ENCODE measurements at regions of chr11 and their contacts with region 1.

Region 1: GRCh38 chr11:13462901-13463778 is at the start of gene BTBD10:
- DNase-seq: peak; percentile 87 to 94 (median 91)
- ATAC-seq: peak; percentile 100
- H3K4me3 ChIP-seq: peak within 1 kb of the TSS; percentile 98
- H3K4me3 Mint-ChIP-seq: peak within 1 kb of the TSS; percentile 97 to 100 (median 99)
- H3K27ac ChIP-seq: peak within 1 kb of the TSS; percentile 96
- H3K27ac Mint-ChIP-seq: peak within 1 kb of the TSS; percentile 93 to 100 (median 97)
- H3K4me1 ChIP-seq: peaks cover 18 to 20% of the 10 kb centered on the region in 2 donors
- H3K4me1 Mint-ChIP-seq: peaks cover 22 to 54% (median 46%) of the 10 kb centered on the region in 7 donors
- H3K27me3 ChIP-seq: no peaks in the 10 kb centered on the region
- H3K27me3 Mint-ChIP-seq: peaks cover 0 to 5% (median 0%) of the 10 kb centered on the region in 5 donors
- total RNA-seq, gene BTBD10: 16.3 to 25.2 (median 19.4) TPM

Region 2: DNA sequence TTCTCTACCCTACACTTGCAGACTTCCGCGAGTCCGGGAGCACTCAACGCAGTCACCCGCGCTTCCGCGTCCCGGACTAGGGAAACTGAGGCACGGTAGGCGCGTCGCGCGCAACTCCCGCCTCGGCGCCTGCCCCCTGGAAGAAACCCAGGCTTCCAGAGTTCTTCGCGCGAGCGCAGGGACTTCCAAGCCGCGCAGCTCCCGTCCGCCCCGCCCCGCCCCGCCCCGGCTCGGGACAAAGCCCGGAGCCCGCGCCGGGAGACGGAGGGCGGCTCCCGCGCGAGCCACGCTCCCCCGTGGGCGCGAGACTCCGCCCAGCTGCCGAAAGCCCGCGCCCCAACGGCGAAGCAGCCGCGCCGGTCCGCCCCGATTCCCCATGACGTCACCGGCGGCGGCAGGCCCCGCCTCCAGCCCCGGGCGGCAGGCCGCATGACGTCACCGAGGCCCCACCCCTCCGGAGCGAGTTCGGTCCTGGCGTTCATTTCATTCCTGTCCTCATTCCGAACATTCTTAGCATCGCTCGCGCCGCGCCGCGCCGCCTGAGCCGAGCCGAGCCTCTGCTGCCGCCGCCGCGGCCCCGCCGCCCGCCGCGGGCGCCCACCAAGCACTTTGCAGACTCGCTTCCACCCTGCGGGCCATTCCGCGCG is 789.1 kb before region 1 on chr11 and contains the start of gene TEAD1:
- CTCF ChIA-PET with region 1: no interaction called
- POLR2A ChIA-PET with region 1: no interaction called
- intact Hi-C with region 1: loop called in 1 of 2 experiments (anchors 10 kb)
- DNase-seq: peak; percentile 74 to 97 (median 81)
- ATAC-seq: peak; percentile 89
- H3K4me3 ChIP-seq: peak within 1 kb of the TSS; percentile 70
- H3K4me3 Mint-ChIP-seq: peak within 1 kb of the TSS; percentile 80 to 91 (median 85)
- H3K27ac ChIP-seq: no peak within 1 kb of the TSS
- H3K27ac Mint-ChIP-seq: peak within 1 kb of the TSS in 4 of 9 donors; percentile 29 to 77 (median 55)
- H3K4me1 ChIP-seq: peaks cover 5 to 6% of the 10 kb centered on the region in 2 donors
- H3K4me1 Mint-ChIP-seq: peaks cover 6 to 24% (median 9%) of the 10 kb centered on the region in 7 donors
- H3K27me3 ChIP-seq: peaks cover 5 to 50% of the 10 kb centered on the region in 2 donors
- H3K27me3 Mint-ChIP-seq: peaks cover 70 to 80% (median 75%) of the 10 kb centered on the region in 5 donors
- total RNA-seq, gene TEAD1: 0.07 to 0.22 TPM in 2 of 5 experiments, not detected in the others

Region 3: DNA sequence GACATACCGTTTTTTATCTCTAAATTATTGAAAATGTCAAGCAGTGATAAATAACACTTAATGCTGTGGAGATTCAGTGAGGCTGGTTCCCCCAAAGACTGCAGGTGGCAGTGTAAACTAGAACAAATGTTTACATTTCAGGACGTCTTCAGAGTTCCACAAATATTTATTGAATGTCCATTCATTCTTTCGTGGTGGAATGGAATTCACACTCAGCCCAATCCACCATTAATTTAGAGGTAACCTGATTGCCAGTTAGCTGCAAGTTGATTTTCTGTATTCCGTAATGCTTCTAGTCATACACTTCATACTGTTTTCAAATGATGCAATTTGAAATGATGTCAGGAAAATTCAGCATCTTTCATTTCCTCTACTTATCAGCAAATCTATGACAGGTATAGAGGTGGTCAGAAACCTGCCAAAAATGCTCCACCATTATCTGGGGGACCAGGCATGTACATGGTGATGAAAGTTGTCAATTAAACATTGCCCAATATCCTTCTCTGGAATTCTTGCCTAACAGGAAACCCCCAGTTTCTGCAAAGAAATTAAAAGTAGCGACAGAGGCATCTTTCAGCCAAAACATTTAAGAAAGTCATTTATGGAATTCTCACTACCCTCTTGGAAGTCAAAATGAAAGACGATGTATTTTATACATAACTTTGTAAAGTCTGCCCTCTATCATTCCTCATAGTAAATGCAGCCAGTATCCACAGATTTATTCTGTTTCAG is 279.9 kb before region 1 on chr11:
- CTCF ChIA-PET with region 1: no interaction called
- POLR2A ChIA-PET with region 1: no interaction called
- intact Hi-C with region 1: loop called (anchors 1 kb)
- DNase-seq: peak in 4 of 9 donors; percentile 3 to 15 (median 12)
- ATAC-seq: peak; percentile 62
- H3K4me3 ChIP-seq: no peak overlapping the region
- H3K4me3 Mint-ChIP-seq: peak overlapping the region in 8 of 10 donors; percentile 10 to 58 (median 36)
- H3K27ac ChIP-seq: no peak overlapping the region
- H3K27ac Mint-ChIP-seq: no peak overlapping the region
- H3K4me1 ChIP-seq: no peaks in the 10 kb centered on the region
- H3K4me1 Mint-ChIP-seq: peaks cover 0 to 9% (median 6%) of the 10 kb centered on the region in 7 donors
- H3K27me3 ChIP-seq: no peaks in the 10 kb centered on the region
- H3K27me3 Mint-ChIP-seq: peaks cover 5 to 16% (median 9%) of the 10 kb centered on the region in 5 donors

Region 4: GRCh38 chr11:13276832-13277767 is 186.0 kb before region 1 on chr11:
- CTCF ChIA-PET with region 1: interaction called, 9 read pairs
- POLR2A ChIA-PET with region 1: interaction called, 4 read pairs
- intact Hi-C with region 1: loop called (anchors 1 kb)
- DNase-seq: peak; percentile 93 to 97 (median 96)
- ATAC-seq: peak; percentile 91
- H3K4me3 ChIP-seq: peak overlapping the region; percentile 80
- H3K4me3 Mint-ChIP-seq: peak overlapping the region; percentile 95 to 99 (median 97)
- H3K27ac ChIP-seq: peak overlapping the region; percentile 81
- H3K27ac Mint-ChIP-seq: peak overlapping the region; percentile 72 to 97 (median 91)
- H3K4me1 ChIP-seq: peaks cover 19 to 29% of the 10 kb centered on the region in 2 donors
- H3K4me1 Mint-ChIP-seq: peaks cover 32 to 47% (median 40%) of the 10 kb centered on the region in 7 donors
- H3K27me3 ChIP-seq: no peaks in the 10 kb centered on the region
- H3K27me3 Mint-ChIP-seq: peaks cover 0 to 51% (median 0%) of the 10 kb centered on the region in 5 donors

Region 5: GRCh38 chr11:13384908-13385640 is 78.1 kb before region 1 on chr11:
- CTCF ChIA-PET with region 1: no interaction called
- POLR2A ChIA-PET with region 1: no interaction called
- intact Hi-C with region 1: loop called in 1 of 2 experiments (anchors 2 kb)
- DNase-seq: peak in 5 of 9 donors; percentile 5 to 22 (median 10)
- ATAC-seq: peak; percentile 46
- H3K4me3 ChIP-seq: no peak overlapping the region
- H3K4me3 Mint-ChIP-seq: no peak overlapping the region
- H3K27ac ChIP-seq: no peak overlapping the region
- H3K27ac Mint-ChIP-seq: peak overlapping the region in 8 of 9 donors; percentile 3 to 80 (median 46)
- H3K4me1 ChIP-seq: no peaks in the 10 kb centered on the region
- H3K4me1 Mint-ChIP-seq: peaks cover 0 to 8% (median 0%) of the 10 kb centered on the region in 7 donors
- H3K27me3 ChIP-seq: no peaks in the 10 kb centered on the region
- H3K27me3 Mint-ChIP-seq: no peaks in the 10 kb centered on the region

Region 6: DNA sequence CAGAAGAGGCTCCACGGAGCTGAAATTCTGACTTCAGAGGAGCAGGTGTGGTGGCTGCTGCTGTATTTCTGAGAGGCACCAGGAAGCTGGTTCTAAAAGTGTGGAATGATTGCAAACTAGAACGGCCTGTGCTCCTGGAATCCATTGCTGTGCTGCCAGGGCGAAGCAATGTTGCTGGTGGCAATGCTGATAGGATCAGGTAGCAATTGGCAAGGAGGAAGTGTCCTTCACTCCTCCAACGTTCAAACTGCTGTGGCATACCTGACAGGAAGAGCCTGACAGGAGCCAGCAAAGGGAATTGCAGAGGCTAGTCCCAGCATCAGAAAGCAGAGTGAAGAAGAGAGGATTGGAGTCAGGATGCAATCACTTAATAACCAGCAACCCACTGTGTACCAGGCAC is 323.5 kb after region 1 on chr11:
- CTCF ChIA-PET with region 1: no interaction called
- POLR2A ChIA-PET with region 1: no interaction called
- intact Hi-C with region 1: no loop called
- DNase-seq: no peak
- ATAC-seq: no peak
- H3K4me3 ChIP-seq: no peak overlapping the region
- H3K4me3 Mint-ChIP-seq: no peak overlapping the region
- H3K27ac ChIP-seq: no peak overlapping the region
- H3K27ac Mint-ChIP-seq: peak overlapping the region in 1 of 9 donors; percentile 31
- H3K4me1 ChIP-seq: no peaks in the 10 kb centered on the region
- H3K4me1 Mint-ChIP-seq: no peaks in the 10 kb centered on the region
- H3K27me3 ChIP-seq: no peaks in the 10 kb centered on the region
- H3K27me3 Mint-ChIP-seq: peaks cover 0 to 14% (median 0%) of the 10 kb centered on the region in 5 donors

Region 7: GRCh38 chr11:14499554-14500180 is 1036.5 kb after region 1 on chr11 and contains the start of gene COPB1:
- CTCF ChIA-PET with region 1: no interaction called
- POLR2A ChIA-PET with region 1: no interaction called
- intact Hi-C with region 1: loop called in 1 of 2 experiments (anchors 5 kb)
- DNase-seq: peak; percentile 82 to 94 (median 92)
- ATAC-seq: peak; percentile 99
- H3K4me3 ChIP-seq: peak within 1 kb of the TSS; percentile 70
- H3K4me3 Mint-ChIP-seq: peak within 1 kb of the TSS; percentile 79 to 98 (median 92)
- H3K27ac ChIP-seq: peak within 1 kb of the TSS; percentile 91
- H3K27ac Mint-ChIP-seq: peak within 1 kb of the TSS; percentile 87 to 98 (median 94)
- H3K4me1 ChIP-seq: peaks cover 0 to 21% of the 10 kb centered on the region in 2 donors
- H3K4me1 Mint-ChIP-seq: peaks cover 27 to 54% (median 47%) of the 10 kb centered on the region in 7 donors
- H3K27me3 ChIP-seq: no peaks in the 10 kb centered on the region
- H3K27me3 Mint-ChIP-seq: no peaks in the 10 kb centered on the region
- total RNA-seq, gene COPB1: 73.4 to 102 (median 75.9) TPM

Measured in naive thymus-derived CD4-positive, alpha-beta T cell (primary cell).